Prostate gland (tissue), 2 donors: ENCODE measurements at regions of chr2 and their contacts with region 1.

Region 1: GRCh38 chr2:65064728-65065552 is 8.7 kb downstream of the CEP68 start:
- DNase-seq: peak; percentile 62
- H3K4me3 ChIP-seq: no peak overlapping the region
- H3K27ac ChIP-seq: peak overlapping the region; percentile 22 to 50
- H3K4me1 ChIP-seq: peaks cover 7% of the 10 kb centered on the region
- H3K27me3 ChIP-seq: no peaks in the 10 kb centered on the region
- CTCF ChIP-seq: peak; percentile 71 to 91 (median 81)
- POLR2A ChIP-seq: no peak

Region 2: DNA sequence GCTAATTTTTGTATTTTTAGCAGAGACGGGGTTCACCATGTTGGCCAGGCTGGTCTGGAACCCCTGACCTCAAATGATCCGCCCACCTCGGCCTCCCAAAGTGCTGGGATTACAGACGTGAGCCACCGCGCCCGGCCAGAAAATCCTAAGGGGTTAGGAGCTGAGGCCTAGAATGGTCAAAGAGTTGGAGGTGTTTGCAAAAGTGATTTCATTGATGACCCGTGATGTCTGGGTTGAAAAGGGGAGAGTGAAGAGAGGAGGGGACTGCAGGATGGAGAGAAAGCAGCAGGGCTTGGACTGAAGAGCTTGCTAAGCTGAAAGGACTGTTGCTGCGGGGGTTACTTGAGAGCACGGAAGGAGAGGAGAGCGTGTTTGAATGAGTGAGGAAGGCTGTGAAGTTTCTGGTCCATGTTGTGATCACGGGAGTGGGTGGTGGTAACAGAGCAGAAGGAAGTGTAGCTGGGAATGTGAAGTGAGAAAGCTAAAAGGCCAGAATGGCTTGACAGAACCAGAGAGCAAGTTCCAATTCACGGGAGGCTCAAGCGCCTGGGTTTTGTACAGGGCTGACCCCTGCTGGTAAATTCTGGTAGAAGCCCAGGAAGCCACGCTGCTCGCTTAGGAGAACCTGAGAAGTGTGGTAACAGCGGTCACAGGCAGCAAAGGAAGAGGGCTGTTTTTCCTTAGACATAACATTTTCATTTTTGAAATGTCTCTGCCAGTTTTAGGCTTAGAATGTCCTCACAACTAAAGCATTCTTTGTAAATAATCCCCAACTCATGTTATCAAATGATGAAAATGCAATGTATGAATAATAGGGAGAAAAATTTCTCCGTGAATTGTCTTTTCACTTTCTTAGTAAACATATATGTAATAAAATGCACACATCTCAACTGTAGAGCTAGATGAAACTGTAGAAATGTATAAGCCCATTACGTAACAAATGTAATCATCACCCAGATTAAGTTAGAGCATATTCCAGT is 122.2 kb after region 1 on chr2:
- intact Hi-C with region 1: loop called (anchors 2 kb)
- DNase-seq: peak; percentile 73
- H3K4me3 ChIP-seq: no peak overlapping the region
- H3K27ac ChIP-seq: no peak overlapping the region
- H3K4me1 ChIP-seq: no peaks in the 10 kb centered on the region
- H3K27me3 ChIP-seq: no peaks in the 10 kb centered on the region
- CTCF ChIP-seq: peak in 3 of 4 experiments; percentile 46 to 73 (median 71)
- POLR2A ChIP-seq: no peak